Dendritic cell treated with granulocyte-macrophage colony-stimulating factor and Interleukin-4, amounts not matched to agents 40 ng/mL and 50 ng/mL, for 4 days (primary cell): ENCODE measurements at regions of chr22 and their contacts with region 1.

Region 1: DNA sequence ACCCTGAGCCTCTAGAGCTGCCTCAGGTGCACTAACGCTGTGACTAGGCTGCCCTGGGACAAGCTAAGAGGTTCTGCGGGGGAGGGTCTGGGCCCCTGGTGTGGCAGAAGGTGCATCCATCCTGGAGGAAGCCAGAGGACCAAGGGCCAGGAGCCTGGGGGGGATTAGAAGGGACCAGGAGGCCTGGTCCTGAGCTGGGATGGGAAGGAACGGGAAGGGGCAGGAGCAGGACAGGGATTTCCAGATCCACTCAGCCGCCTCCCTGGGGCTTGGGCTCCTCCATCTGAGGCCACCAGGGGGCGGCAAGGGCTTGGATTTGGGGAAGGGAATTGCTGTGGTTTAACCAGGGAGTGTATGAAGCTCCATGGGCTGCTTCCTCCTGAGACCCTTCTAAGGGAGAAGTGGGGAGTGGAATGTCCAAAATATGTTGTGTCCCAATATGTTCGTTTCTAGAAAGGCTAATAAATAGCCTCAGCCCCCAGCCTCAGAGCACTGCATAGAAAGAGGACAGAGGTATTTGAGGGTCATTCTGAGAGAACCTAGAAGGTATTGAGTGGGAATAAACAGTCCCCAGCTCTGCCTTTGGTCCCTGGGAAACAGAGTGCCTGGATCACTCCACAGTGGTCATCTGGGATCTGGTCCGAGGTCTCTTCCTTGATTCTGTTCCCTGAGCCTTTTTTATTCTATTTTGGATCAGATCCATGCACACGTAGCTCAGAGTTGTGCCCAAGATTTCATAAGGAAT is 17.4 kb upstream of the PRAME start:
- H3K4me3 Mint-ChIP-seq: no peak overlapping the region
- H3K27ac Mint-ChIP-seq: no peak overlapping the region
- H3K4me1 Mint-ChIP-seq: no peaks in the 10 kb centered on the region
- H3K27me3 Mint-ChIP-seq: peaks cover 12% of the 10 kb centered on the region

Region 2: GRCh38 chr22:22463855-22464540 is 112.4 kb before region 1 on chr22:
- intact Hi-C with region 1: loop called (anchors 10 kb)
- H3K4me3 Mint-ChIP-seq: no peak overlapping the region
- H3K27ac Mint-ChIP-seq: no peak overlapping the region
- H3K4me1 Mint-ChIP-seq: no peaks in the 10 kb centered on the region
- H3K27me3 Mint-ChIP-seq: peaks cover 35% of the 10 kb centered on the region